ENCODE measurements at regions of chr14 and their contacts with region 1.

Region 1: DNA sequence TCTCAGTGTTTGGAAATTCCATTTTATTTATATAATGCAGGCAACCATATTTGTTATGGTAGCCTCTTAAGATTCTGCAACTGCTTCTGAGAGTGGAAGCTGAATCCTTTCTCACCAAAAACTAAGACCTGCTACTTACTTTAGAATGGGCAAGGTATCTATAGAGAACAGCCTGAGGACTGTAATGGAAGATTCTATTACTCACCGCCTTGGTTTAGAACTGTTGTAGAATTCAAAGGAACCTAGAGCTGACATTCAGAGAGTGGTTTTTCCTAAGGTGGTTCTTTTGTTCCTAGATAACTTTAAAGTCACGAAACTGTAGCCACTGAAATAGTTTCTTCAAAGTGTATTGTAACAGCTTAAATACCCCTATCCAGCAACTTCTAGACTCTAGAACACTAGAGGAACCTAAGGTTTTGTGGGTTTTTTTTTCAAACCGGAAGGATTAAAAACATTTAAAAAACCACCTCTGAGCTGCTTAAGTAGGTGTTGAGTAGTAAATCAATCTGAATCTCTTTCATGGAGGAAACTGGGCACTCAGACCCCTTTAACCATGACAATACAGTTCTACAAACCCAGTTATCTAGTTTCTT is 4.2 kb downstream of the TDP1 start:
- DNase-seq: peak in 1 of 2 experiments; percentile 34
- H3K4me3 ChIP-seq: no peak overlapping the region
- H3K4me1 ChIP-seq: peaks cover 32% of the 10 kb centered on the region
- H3K27me3 ChIP-seq: no peaks in the 10 kb centered on the region

Region 2: GRCh38 chr14:89881839-89882238 is 78.1 kb before region 1 on chr14:
- in situ Hi-C with region 1: no loop called
- DNase-seq: no peak
- H3K4me3 ChIP-seq: no peak overlapping the region
- H3K4me1 ChIP-seq: peaks cover 3% of the 10 kb centered on the region; the same call in 1 of the 2 replicates
- H3K27me3 ChIP-seq: no peaks in the 10 kb centered on the region

Region 3: GRCh38 chr14:90109646-90110257 is 149.8 kb after region 1 on chr14:
- in situ Hi-C with region 1: no loop called
- DNase-seq: no peak
- H3K4me3 ChIP-seq: no peak overlapping the region
- H3K4me1 ChIP-seq: no peaks in the 10 kb centered on the region
- H3K27me3 ChIP-seq: no peaks in the 10 kb centered on the region

Region 4: GRCh38 chr14:90235179-90235976 is 275.4 kb after region 1 on chr14:
- in situ Hi-C with region 1: loop called (anchors 10 kb)
- DNase-seq: peak; percentile 61 to 83
- H3K4me3 ChIP-seq: no peak overlapping the region
- H3K4me1 ChIP-seq: no peaks in the 10 kb centered on the region
- H3K27me3 ChIP-seq: no peaks in the 10 kb centered on the region

Measured in HAP-1 (cell line).